Natural killer cell (primary cell): ENCODE measurements at regions of chrX and their contacts with region 1.

Region 1: GRCh38 chrX:69222103-69223090 is 57.1 kb upstream of the PJA1 start:
- DNase-seq: peak; percentile 62 to 83
- ATAC-seq: peak; percentile 76 to 88 (median 82)
- H3K4me3 ChIP-seq: no peak overlapping the region
- H3K4me3 Mint-ChIP-seq: no peak overlapping the region
- H3K27ac ChIP-seq: no peak overlapping the region
- H3K27ac Mint-ChIP-seq: no peak overlapping the region
- H3K4me1 ChIP-seq: peaks cover 3% of the 10 kb centered on the region
- H3K4me1 Mint-ChIP-seq: no peaks in the 10 kb centered on the region
- H3K27me3 ChIP-seq: no peaks in the 10 kb centered on the region
- H3K27me3 Mint-ChIP-seq: peaks cover 0 to 6% of the 10 kb centered on the region in 2 donors
- CTCF ChIP-seq: peak; percentile 67

Region 2: DNA sequence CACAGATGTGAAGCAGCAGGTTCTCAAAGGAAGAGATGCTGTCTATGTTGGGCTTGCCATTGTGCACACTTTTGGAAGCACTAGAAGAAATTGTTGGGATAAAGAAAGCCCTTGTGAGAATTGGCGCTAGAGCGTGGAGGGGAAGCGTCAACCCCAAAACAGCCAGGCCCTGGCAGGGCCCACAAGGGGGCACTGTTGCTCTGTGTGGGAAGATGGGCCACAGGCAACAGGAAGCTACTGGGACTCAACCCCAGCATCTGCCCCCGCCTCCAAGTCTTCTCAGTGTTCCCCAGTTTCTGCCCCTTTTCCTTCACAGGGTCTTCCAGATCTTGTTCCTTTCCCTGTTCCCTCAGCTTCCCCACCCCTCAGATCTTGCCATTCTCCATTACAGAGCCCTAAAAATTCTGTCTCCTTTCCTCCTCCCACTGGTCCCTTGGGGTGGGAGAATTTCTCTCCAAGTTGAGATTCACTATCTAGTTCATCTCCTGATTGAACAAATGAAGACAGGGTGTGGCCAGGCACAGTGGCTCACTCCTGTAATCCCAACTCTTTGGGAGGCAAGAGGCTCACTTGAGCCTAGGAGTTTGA is 489.4 kb before region 1 on chrX:
- intact Hi-C with region 1: loop called (anchors 5 kb)
- DNase-seq: peak; percentile 37 to 69
- ATAC-seq: peak in 2 of 3 donors; percentile 74 to 89
- H3K4me3 ChIP-seq: no peak overlapping the region
- H3K4me3 Mint-ChIP-seq: no peak overlapping the region
- H3K27ac ChIP-seq: no peak overlapping the region
- H3K27ac Mint-ChIP-seq: no peak overlapping the region
- H3K4me1 ChIP-seq: no peaks in the 10 kb centered on the region
- H3K4me1 Mint-ChIP-seq: no peaks in the 10 kb centered on the region
- H3K27me3 ChIP-seq: no peaks in the 10 kb centered on the region
- H3K27me3 Mint-ChIP-seq: peaks cover 4 to 27% of the 10 kb centered on the region in 2 donors
- CTCF ChIP-seq: peak; percentile 44

Region 3: DNA sequence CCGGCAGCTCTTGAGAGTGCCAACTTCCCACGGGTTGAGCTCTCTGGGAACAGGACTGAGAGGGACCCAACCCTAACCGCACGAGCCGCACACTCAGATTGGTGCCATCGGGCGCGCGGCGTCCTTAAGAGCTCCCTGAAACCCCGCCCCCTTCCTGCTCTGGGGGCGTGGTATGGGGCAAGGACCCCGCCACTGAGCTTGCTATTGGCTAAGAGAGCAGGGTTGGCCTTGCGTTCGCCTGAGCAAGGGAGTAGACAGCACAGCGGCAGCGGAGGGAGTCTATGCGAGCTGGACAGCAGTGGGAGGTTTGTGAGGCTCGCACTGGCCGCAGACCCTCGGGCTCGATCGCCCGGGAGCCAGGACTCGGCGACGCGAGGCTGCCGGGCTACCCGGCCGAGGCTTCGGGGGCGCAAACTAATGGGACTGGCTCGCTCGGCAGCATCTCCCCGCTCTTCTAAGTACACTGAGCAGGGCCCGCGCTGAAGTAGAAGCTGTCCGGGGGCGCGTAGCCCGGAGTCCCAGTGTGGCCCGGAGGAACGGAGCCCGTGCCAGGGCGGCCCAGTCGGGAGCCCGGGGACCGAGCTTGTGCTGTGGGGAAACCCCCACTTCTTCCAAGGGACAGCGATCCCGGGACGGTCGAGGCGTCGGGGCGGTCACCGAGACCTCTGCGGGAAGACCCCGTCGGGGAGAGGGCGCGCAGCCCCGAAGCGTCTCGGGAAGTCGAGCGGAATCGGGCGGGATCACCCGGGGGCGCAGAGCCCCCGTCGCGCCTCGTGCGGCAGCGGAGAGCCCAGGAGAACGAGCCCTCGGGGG is 393.5 kb before region 1 on chrX and contains the start of gene EFNB1:
- intact Hi-C with region 1: loop called (anchors 1 kb)
- DNase-seq: peak; percentile 76 to 92
- ATAC-seq: peak; percentile 95 to 99 (median 95)
- H3K4me3 ChIP-seq: peak within 1 kb of the TSS; percentile 76
- H3K4me3 Mint-ChIP-seq: peak within 1 kb of the TSS; percentile 90
- H3K27ac ChIP-seq: peak within 1 kb of the TSS; percentile 26
- H3K27ac Mint-ChIP-seq: peak within 1 kb of the TSS; percentile 59 to 84
- H3K4me1 ChIP-seq: peaks cover 36% of the 10 kb centered on the region
- H3K4me1 Mint-ChIP-seq: peaks cover 5 to 34% of the 10 kb centered on the region in 2 donors
- H3K27me3 ChIP-seq: peaks cover 3% of the 10 kb centered on the region
- H3K27me3 Mint-ChIP-seq: peaks cover 0 to 3% of the 10 kb centered on the region in 2 donors
- CTCF ChIP-seq: no peak
- total RNA-seq, gene EFNB1: 3.2 to 4.7 (median 3.3) TPM

Region 4: GRCh38 chrX:69093960-69094871 is 128.2 kb before region 1 on chrX:
- intact Hi-C with region 1: loop called (anchors 1 kb)
- DNase-seq: peak in 1 of 2 donors; percentile 59
- ATAC-seq: peak in 1 of 3 donors; percentile 68
- H3K4me3 ChIP-seq: no peak overlapping the region
- H3K4me3 Mint-ChIP-seq: no peak overlapping the region
- H3K27ac ChIP-seq: no peak overlapping the region
- H3K27ac Mint-ChIP-seq: no peak overlapping the region
- H3K4me1 ChIP-seq: no peaks in the 10 kb centered on the region
- H3K4me1 Mint-ChIP-seq: no peaks in the 10 kb centered on the region
- H3K27me3 ChIP-seq: no peaks in the 10 kb centered on the region
- H3K27me3 Mint-ChIP-seq: no peaks in the 10 kb centered on the region
- CTCF ChIP-seq: peak; percentile 47

Region 5: GRCh38 chrX:69179380-69179911 is 43.0 kb before region 1 on chrX:
- intact Hi-C with region 1: no loop called
- DNase-seq: no peak
- ATAC-seq: no peak
- H3K4me3 ChIP-seq: no peak overlapping the region
- H3K4me3 Mint-ChIP-seq: no peak overlapping the region
- H3K27ac ChIP-seq: no peak overlapping the region
- H3K27ac Mint-ChIP-seq: no peak overlapping the region
- H3K4me1 ChIP-seq: no peaks in the 10 kb centered on the region
- H3K4me1 Mint-ChIP-seq: no peaks in the 10 kb centered on the region
- H3K27me3 ChIP-seq: no peaks in the 10 kb centered on the region
- H3K27me3 Mint-ChIP-seq: peaks cover 9 to 24% of the 10 kb centered on the region in 2 donors
- CTCF ChIP-seq: no peak

Region 6: DNA sequence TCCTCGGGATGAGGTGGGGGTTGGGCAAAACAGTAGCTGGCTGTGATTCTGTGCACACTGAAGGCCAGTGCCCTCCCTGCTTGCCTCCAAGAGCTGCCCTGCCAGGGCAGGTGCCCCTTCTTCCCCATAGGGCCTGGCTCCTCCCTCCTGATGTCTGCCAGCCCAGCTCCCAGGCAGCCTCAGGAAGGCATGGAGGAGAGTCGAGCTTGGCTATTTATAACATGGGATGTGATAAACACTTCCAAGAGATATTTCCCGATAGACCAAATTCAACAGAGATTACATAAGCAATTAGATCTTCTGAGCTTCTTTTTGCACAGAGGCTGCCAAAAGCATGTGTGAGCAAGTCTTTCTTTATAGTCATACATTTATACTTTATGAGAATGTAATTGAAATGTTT is 11.8 kb before region 1 on chrX:
- intact Hi-C with region 1: no loop called
- DNase-seq: no peak
- ATAC-seq: no peak
- H3K4me3 ChIP-seq: no peak overlapping the region
- H3K4me3 Mint-ChIP-seq: no peak overlapping the region
- H3K27ac ChIP-seq: no peak overlapping the region
- H3K27ac Mint-ChIP-seq: no peak overlapping the region
- H3K4me1 ChIP-seq: peaks cover 2% of the 10 kb centered on the region
- H3K4me1 Mint-ChIP-seq: peaks cover 0 to 6% of the 10 kb centered on the region in 2 donors
- H3K27me3 ChIP-seq: no peaks in the 10 kb centered on the region
- H3K27me3 Mint-ChIP-seq: peaks cover 0 to 8% of the 10 kb centered on the region in 2 donors
- CTCF ChIP-seq: no peak